GM12878 (cell line): ENCODE measurements at regions of chr2 and their contacts with region 1.

Region 1: GRCh38 chr2:127355386-127356008 is 32.3 kb downstream of the MAP3K2 start:
- DNase-seq: no peak
- ATAC-seq: peak; percentile 90
- H3K4me3 ChIP-seq: no peak overlapping the region
- H3K27ac ChIP-seq: no peak overlapping the region
- H3K4me1 ChIP-seq: no peaks in the 10 kb centered on the region
- H3K27me3 ChIP-seq: no peaks in the 10 kb centered on the region
- CTCF ChIP-seq: peak; percentile 54 to 68 (median 67)
- EP300 ChIP-seq: no peak
- POLR2A ChIP-seq: no peak
- RAD21 ChIP-seq: peak; percentile 67

Region 2: DNA sequence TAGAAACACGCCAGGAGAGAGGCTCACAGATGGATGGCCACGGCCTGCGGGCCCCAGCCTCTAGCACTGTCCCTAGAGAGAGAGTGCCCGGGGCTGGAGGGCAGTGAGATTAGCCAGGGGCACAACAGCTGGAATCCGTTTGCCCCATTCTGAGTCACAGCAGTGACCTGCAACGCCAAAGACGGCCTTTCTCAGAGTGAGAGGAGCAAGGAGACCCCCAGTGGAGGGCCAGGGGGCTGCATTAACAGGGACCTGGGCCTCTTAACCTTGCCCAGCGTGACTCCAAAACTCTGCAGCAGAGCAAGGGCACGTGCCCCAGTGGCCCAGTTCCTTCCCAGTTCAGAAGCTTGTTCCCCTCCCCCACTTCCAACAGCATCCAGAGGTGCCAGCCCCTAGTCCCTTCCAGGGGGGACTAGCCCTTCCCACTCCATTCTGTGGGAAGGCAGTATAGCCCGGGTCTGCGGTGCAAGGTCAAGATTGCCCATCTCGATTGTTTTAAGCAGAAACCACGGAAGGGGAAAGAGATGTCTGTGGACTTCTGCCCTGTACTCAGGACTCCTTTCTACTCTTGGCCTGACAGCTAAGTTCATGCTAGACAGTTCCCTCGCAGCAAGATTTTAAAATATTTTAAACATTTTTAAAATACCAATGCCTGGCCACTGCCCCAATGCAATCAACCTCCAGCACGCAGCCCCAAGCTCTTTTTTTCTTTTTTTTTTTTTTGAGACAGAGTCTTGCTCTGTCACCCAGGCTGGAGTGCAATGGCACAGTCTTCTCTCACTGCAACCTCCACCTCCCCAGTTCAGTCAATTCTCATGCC is 197.6 kb before region 1 on chr2:
- CTCF ChIA-PET with region 1: no interaction called
- POLR2A ChIA-PET with region 1: no interaction called
- RAD21 ChIA-PET with region 1: no interaction called
- SMC1A ChIA-PET with region 1: no interaction called
- in situ Hi-C with region 1: no loop called
- intact Hi-C with region 1: no loop called
- DNase-seq: no peak
- ATAC-seq: peak; percentile 63
- H3K4me3 ChIP-seq: no peak overlapping the region
- H3K27ac ChIP-seq: no peak overlapping the region
- H3K4me1 ChIP-seq: no peaks in the 10 kb centered on the region
- H3K27me3 ChIP-seq: no peaks in the 10 kb centered on the region; a peak in 1 of 4 replicates
- CTCF ChIP-seq: no peak
- EP300 ChIP-seq: no peak
- POLR2A ChIP-seq: no peak
- RAD21 ChIP-seq: no peak

Region 3: GRCh38 chr2:127313406-127313805 is 42.1 kb before region 1 on chr2:
- CTCF ChIA-PET with region 1: no interaction called
- POLR2A ChIA-PET with region 1: no interaction called
- RAD21 ChIA-PET with region 1: no interaction called
- SMC1A ChIA-PET with region 1: no interaction called
- in situ Hi-C with region 1: no loop called
- intact Hi-C with region 1: no loop called
- DNase-seq: peak; percentile 57
- ATAC-seq: peak; percentile 99
- H3K4me3 ChIP-seq: no peak overlapping the region
- H3K27ac ChIP-seq: no peak overlapping the region
- H3K4me1 ChIP-seq: peaks cover 18% of the 10 kb centered on the region
- H3K27me3 ChIP-seq: no peaks in the 10 kb centered on the region
- CTCF ChIP-seq: no peak
- EP300 ChIP-seq: peak; percentile 35 to 67; a peak in 3 of 4 replicates
- POLR2A ChIP-seq: no peak
- RAD21 ChIP-seq: no peak

Region 4: DNA sequence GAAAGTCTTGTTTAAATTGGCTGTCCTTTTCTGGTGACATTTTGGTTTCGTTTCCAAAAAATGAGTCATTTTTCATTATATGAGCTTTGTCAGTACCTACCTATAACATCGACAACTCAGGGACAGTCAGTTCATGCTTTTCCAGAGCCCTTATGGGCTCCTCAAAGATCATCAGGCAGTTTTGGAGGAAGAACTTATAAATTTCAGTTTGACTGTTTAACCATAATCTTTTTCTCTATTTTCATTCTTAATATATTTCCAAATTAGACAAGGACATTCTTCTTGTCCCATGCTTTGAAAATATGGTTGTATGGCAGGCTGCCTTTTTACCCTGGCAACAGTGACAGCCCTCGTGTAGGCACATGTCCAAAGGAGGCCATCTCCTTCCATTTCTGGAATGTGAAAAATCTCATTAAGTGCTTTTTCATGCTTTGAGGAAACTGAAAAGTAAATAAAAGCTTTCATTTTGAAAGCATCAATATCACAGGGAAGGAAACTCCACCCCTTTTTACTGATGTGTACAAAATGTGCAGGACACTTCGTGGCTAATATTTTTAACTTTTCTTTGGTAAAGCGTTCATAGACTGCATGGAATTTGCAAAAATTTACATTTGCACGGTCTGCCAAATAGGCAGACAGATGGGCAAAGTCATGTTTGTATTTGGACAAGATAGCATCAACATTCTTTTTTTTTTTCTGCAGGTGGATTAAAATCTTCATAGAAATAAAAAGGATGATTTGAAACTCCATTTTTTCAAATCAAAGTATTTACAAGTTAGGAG is 55.6 kb after region 1 on chr2:
- CTCF ChIA-PET with region 1: interaction called, 5 read pairs
- POLR2A ChIA-PET with region 1: no interaction called
- RAD21 ChIA-PET with region 1: no interaction called
- SMC1A ChIA-PET with region 1: no interaction called
- in situ Hi-C with region 1: no loop called
- intact Hi-C with region 1: loop called (anchors 2 kb)
- DNase-seq: no peak
- ATAC-seq: peak; percentile 69
- H3K4me3 ChIP-seq: peak overlapping the region; percentile 27
- H3K27ac ChIP-seq: peak overlapping the region; percentile 28
- H3K4me1 ChIP-seq: peaks cover 13% of the 10 kb centered on the region
- H3K27me3 ChIP-seq: peaks cover 0 to under 1% of the 10 kb centered on the region in 2 experiments; a peak in 1 of 4 replicates
- CTCF ChIP-seq: no peak
- EP300 ChIP-seq: no peak
- POLR2A ChIP-seq: no peak
- RAD21 ChIP-seq: no peak

Region 5: DNA sequence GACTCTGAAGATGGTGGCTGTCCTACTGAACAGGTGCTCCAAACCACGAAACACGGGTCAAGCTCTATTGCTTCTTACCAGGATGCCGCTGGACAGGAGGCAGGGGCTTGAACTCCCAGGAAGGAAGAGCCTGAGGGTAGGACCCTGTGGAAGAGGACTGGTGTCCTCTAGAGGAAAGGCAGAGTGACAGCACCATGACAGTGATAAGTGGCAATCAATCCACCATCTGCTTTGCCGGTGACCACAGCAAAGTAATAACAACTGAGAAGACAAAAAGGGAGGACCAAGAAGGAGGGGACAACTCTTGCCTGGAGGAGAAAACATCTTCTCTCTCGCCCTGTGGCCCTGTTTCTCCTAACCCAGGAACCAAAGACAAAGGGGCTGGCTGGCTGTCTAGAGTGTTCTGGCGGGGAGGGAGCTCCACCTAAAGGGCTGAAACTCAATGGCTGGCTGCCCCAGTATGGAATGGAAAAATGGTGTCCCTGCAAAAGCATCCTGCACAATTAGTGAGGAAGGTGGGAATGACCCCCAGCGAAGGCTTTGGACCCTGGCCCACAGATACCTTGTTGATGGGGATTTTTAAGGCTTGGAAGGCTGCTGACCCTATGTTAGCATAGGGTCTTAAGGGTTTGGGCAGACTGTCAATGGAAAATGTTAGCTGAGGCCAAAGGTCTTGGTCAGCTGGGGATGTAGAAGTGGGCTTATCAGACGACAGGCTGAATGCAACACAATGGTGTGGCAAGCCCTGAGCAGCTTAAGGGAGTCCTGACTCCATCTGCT is 98.1 kb after region 1 on chr2:
- CTCF ChIA-PET with region 1: no interaction called
- POLR2A ChIA-PET with region 1: no interaction called
- RAD21 ChIA-PET with region 1: no interaction called
- SMC1A ChIA-PET with region 1: no interaction called
- in situ Hi-C with region 1: no loop called
- intact Hi-C with region 1: loop called (anchors 5 kb)
- DNase-seq: no peak
- ATAC-seq: peak; percentile 66
- H3K4me3 ChIP-seq: no peak overlapping the region
- H3K27ac ChIP-seq: no peak overlapping the region
- H3K4me1 ChIP-seq: no peaks in the 10 kb centered on the region; the same call in 1 of the 2 replicates
- H3K27me3 ChIP-seq: no peaks in the 10 kb centered on the region
- CTCF ChIP-seq: peak; percentile 30 to 35 (median 34); a peak in 3 of 6 replicates
- EP300 ChIP-seq: no peak
- POLR2A ChIP-seq: no peak
- RAD21 ChIP-seq: peak; percentile 46